PC-9 (cell line): ENCODE measurements at regions of chr7 and their contacts with region 1.

Region 1: DNA sequence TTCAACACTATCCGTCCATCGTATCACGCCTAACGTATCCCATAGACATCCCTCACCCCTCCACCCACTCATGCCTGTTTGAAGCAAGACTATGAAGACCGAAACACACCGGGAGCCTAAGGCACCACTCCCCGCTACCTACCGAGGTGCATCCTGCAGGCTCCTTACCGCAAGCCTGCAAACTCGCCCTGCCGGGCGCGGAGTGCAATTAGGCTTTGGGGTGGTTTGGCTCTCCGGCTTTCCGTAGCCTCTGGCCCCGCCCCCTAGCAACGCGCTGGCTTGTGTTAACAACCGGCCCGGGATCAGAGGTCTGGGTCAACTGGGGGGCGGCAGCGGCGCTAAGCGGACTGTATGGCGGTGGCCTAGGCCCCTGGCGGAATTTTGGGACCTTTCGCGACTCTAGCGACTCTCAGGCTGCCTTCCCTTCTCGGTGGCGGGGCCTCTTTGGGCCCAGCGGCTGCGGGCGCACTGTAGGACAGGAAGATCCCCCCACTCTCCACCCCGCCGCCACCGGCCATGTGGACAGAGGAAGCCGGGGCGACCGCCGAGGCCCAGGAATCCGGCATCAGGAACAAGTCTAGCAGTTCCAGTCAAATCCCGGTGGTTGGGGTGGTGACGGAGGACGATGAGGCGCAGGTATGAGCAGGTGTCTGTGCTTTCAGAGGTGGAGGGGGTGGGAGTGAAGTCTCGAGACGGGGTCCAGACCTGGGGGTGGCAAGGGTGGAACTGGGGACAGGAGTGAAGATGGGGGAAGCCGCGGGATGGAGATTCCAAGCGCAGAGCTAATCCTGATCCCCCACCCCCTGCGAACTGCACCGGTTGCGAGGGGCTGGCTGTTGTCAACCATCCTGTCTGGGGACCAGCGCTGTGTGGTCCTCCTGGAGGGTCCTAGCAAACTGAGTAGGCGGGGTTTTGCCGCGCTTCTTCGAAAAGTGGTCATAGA is at the start of gene CFAP69:
- DNase-seq: peak; percentile 76 to 95
- H3K4me3 ChIP-seq: peak within 1 kb of the TSS; percentile 76
- H3K27ac ChIP-seq: no peak within 1 kb of the TSS
- H3K4me1 ChIP-seq: peaks cover 22% of the 10 kb centered on the region
- H3K27me3 ChIP-seq: no peaks in the 10 kb centered on the region
- CTCF ChIP-seq: 0 out of 2 replicates have a peak, but pooled peaks have one; percentile 18
- total RNA-seq, gene CFAP69: 15.0 and 18.5 TPM in 2 replicates

Region 2: GRCh38 chr7:90178679-90179278 is 66.4 kb before region 1 on chr7:
- CTCF ChIA-PET with region 1: no interaction called
- POLR2A ChIA-PET with region 1: no interaction called
- intact Hi-C with region 1: loop called (anchors 1 kb)
- DNase-seq: peak; percentile 53 to 87
- H3K4me3 ChIP-seq: peak overlapping the region; percentile 17; the same call in 1 of the 2 replicates
- H3K27ac ChIP-seq: peak overlapping the region; percentile 93
- H3K4me1 ChIP-seq: peaks cover 42% of the 10 kb centered on the region
- H3K27me3 ChIP-seq: no peaks in the 10 kb centered on the region
- CTCF ChIP-seq: no peak

Region 3: GRCh38 chr7:90625562-90625961 is 380.4 kb after region 1 on chr7:
- CTCF ChIA-PET with region 1: no interaction called
- POLR2A ChIA-PET with region 1: no interaction called
- intact Hi-C with region 1: no loop called
- DNase-seq: peak in 1 of 2 experiments; percentile 33
- H3K4me3 ChIP-seq: no peak overlapping the region
- H3K27ac ChIP-seq: no peak overlapping the region
- H3K4me1 ChIP-seq: no peaks in the 10 kb centered on the region
- H3K27me3 ChIP-seq: no peaks in the 10 kb centered on the region
- CTCF ChIP-seq: no peak